ENCODE measurements at regions of chr1 and their contacts with region 1.

Region 1: DNA sequence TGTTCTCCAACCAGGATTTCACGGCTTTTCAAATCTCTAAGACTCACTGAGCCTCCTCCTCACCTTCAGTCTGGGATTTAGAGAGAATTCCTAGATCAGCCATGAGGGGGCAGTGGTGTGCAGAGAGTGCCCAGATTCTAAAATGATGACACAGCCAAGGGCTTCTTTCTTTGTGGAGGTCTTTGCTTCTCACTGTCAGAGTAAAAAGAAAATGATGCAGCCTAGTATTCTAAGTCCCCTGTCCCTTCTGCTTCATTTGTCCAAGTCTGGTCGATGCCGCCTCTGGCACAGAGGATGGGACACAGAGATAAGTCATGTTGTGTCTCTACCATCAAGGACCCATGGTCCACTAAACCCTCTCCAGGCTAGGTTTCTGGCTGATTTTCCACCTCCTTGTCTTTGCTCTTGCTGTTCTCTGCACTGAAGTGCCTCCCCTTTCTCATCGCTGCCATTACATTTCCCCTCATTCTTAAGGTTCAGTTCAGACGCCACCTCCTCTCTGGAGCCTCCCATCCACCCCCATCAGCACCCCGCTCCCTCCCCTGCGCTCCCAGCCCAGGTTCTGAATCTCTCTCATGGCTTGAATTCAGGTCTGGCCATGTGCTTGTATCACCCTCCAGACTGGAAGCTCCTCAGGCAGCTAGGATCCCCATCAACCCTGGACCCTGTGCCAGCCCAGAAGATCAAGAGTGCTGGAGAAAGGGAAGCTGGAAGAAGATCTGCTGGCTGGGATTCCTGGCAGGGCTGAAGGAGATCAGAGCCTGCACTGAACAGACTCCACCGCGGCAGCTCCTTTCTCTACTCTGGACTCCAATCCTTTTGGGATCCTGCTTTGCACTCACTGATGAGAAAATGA is 12.0 kb upstream of the TINAGL1 start:
- DNase-seq: peak in 7 of 9 donors; percentile 8 to 63 (median 43)
- ATAC-seq: peak; percentile 77
- H3K4me3 ChIP-seq: no peak overlapping the region
- H3K4me3 Mint-ChIP-seq: no peak overlapping the region
- H3K27ac ChIP-seq: no peak overlapping the region
- H3K27ac Mint-ChIP-seq: no peak overlapping the region
- H3K4me1 ChIP-seq: no peaks in the 10 kb centered on the region
- H3K4me1 Mint-ChIP-seq: no peaks in the 10 kb centered on the region
- H3K27me3 ChIP-seq: no peaks in the 10 kb centered on the region
- H3K27me3 Mint-ChIP-seq: peaks cover 17 to 38% (median 25%) of the 10 kb centered on the region in 5 donors

Region 2: GRCh38 chr1:31593770-31594632 is 29.6 kb after region 1 on chr1:
- CTCF ChIA-PET with region 1: no interaction called
- POLR2A ChIA-PET with region 1: no interaction called
- intact Hi-C with region 1: loop called in 1 of 2 experiments (anchors 1 kb)
- DNase-seq: peak in 8 of 9 donors; percentile 31 to 58 (median 44)
- ATAC-seq: peak; percentile 90
- H3K4me3 ChIP-seq: no peak overlapping the region
- H3K4me3 Mint-ChIP-seq: no peak overlapping the region
- H3K27ac ChIP-seq: no peak overlapping the region
- H3K27ac Mint-ChIP-seq: no peak overlapping the region
- H3K4me1 ChIP-seq: no peaks in the 10 kb centered on the region
- H3K4me1 Mint-ChIP-seq: peaks cover 0 to 3% (median 0%) of the 10 kb centered on the region in 7 donors
- H3K27me3 ChIP-seq: no peaks in the 10 kb centered on the region
- H3K27me3 Mint-ChIP-seq: peaks cover 14 to 40% (median 25%) of the 10 kb centered on the region in 5 donors

Region 3: GRCh38 chr1:31617917-31618660 is 53.7 kb after region 1 on chr1:
- CTCF ChIA-PET with region 1: no interaction called
- POLR2A ChIA-PET with region 1: no interaction called
- intact Hi-C with region 1: loop called in 1 of 2 experiments (anchors 1 kb)
- DNase-seq: peak in 8 of 9 donors; percentile 22 to 46 (median 36)
- ATAC-seq: peak; percentile 77
- H3K4me3 ChIP-seq: peak overlapping the region; percentile 24
- H3K4me3 Mint-ChIP-seq: peak overlapping the region in 7 of 10 donors; percentile 33 to 63 (median 51)
- H3K27ac ChIP-seq: no peak overlapping the region
- H3K27ac Mint-ChIP-seq: no peak overlapping the region
- H3K4me1 ChIP-seq: no peaks in the 10 kb centered on the region
- H3K4me1 Mint-ChIP-seq: peaks cover 0 to 10% (median 5%) of the 10 kb centered on the region in 7 donors
- H3K27me3 ChIP-seq: peaks cover 0 to 3% of the 10 kb centered on the region in 2 donors
- H3K27me3 Mint-ChIP-seq: peaks cover 29 to 37% (median 30%) of the 10 kb centered on the region in 5 donors

Region 4: DNA sequence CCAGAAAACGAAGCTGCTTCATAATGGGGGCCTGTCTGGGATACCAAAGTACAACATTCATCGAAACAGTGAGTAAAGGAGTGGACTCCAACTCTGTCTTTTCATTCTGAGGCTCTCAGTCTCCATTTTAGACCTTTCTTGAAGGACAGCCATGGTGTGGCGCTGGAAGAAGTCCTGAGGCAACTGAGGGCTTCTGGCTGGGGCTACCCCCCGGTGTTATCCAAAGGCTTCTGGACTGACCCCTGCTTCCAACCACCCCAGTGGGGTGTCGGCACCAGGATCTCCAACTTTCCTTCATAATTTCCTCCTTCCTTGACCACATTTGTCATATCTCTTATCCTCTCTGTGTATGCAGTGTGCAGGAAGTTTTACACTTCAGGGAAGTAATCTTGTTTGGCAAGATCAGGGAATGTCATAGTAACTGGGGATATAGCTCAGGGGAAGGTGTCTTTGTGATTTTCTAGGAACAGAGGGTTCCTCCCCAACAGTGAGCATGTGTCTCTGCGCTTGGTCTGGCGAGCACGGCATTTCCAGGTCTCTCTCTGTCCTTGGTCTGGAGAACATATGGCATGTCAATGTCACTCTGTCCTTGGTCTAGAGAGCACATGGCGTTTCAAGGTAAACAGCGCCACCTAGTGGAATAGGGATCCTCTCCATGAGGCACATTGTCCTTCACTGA is 849.3 kb after region 1 on chr1:
- CTCF ChIA-PET with region 1: no interaction called
- POLR2A ChIA-PET with region 1: no interaction called
- intact Hi-C with region 1: loop called in 1 of 2 experiments (anchors 10 kb)
- DNase-seq: peak; percentile 27 to 78 (median 70)
- ATAC-seq: peak; percentile 90
- H3K4me3 ChIP-seq: no peak overlapping the region
- H3K4me3 Mint-ChIP-seq: no peak overlapping the region
- H3K27ac ChIP-seq: no peak overlapping the region
- H3K27ac Mint-ChIP-seq: peak overlapping the region in 3 of 9 donors; percentile 8 to 26 (median 21)
- H3K4me1 ChIP-seq: no peaks in the 10 kb centered on the region
- H3K4me1 Mint-ChIP-seq: peaks cover 0 to 3% (median 0%) of the 10 kb centered on the region in 7 donors
- H3K27me3 ChIP-seq: peaks cover 0 to 6% of the 10 kb centered on the region in 2 donors
- H3K27me3 Mint-ChIP-seq: peaks cover 4 to 40% (median 8%) of the 10 kb centered on the region in 5 donors